Ascending aorta (tissue), 2 donors: ENCODE measurements at regions of chr19 and their contacts with region 1.

Region 1: GRCh38 chr19:14117668-14118164 is at the start of gene PRKACA:
- DNase-seq: peak; percentile 97 to 99
- H3K4me3 ChIP-seq: peak within 1 kb of the TSS; percentile 71 to 96
- H3K27ac ChIP-seq: peak within 1 kb of the TSS; percentile 92 to 99
- H3K4me1 ChIP-seq: peaks cover 23 to 51% of the 10 kb centered on the region in 2 donors
- H3K27me3 ChIP-seq: no peaks in the 10 kb centered on the region
- CTCF ChIP-seq: no peak
- total RNA-seq, gene PRKACA: 92.6 TPM

Region 2: DNA sequence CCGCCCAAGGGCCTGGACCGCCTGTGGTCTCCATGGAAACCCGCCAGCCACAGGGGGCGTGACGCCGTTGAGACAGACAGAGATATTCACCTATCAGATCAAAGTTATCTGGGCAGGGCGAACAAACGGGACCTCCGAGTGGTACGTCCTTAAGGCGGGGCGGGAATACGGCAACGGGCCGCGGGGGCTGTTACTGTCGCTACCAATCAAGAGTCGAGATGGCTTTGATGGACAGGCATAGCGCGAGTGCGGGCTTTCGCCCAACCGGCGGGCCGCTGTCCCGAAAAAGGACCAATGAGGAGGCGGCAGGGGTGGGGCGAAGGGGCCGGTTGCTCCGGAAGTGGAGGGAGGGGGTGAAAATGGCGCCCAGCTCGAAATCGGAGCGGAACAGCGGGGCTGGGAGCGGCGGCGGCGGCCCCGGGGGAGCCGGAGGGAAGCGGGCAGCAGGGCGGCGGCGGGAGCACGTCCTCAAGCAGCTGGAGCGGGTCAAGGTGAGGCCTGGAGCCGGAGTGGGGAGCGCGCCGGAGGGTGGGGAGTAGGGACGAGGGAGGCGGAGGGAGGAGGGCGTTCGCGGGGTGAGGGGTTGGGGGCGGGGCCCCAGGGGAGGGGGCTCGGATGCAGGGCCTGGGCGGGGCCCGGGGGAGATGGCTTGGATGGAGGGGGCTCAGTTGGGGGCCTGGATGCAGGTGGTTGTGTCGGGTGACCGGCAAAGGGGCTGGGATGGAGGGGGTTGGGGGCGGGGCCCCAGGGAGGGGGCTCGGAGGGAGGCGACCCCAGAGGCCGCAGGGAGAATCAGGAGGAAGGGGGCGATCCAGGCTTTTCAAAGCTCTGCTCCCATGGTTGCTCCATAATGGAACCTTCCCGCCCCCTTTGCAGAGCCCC is 165.3 kb before region 1 on chr19 and contains the start of gene DCAF15:
- intact Hi-C with region 1: loop called (anchors 5 kb)
- DNase-seq: peak; percentile 99 to 100
- H3K4me3 ChIP-seq: peak within 1 kb of the TSS; percentile 79 to 81
- H3K27ac ChIP-seq: peak within 1 kb of the TSS; percentile 76 to 77
- H3K4me1 ChIP-seq: peaks cover 6 to 12% of the 10 kb centered on the region in 2 donors
- H3K27me3 ChIP-seq: no peaks in the 10 kb centered on the region
- CTCF ChIP-seq: no peak
- total RNA-seq, gene DCAF15: 35.0 TPM

Region 3: GRCh38 chr19:14081325-14082093 is 36.2 kb before region 1 on chr19:
- intact Hi-C with region 1: loop called (anchors 2 kb)
- DNase-seq: peak; percentile 94 to 99
- H3K4me3 ChIP-seq: peak overlapping the region; percentile 80 to 93
- H3K27ac ChIP-seq: peak overlapping the region; percentile 92 to 97
- H3K4me1 ChIP-seq: peaks cover 4 to 14% of the 10 kb centered on the region in 2 donors
- H3K27me3 ChIP-seq: no peaks in the 10 kb centered on the region
- CTCF ChIP-seq: no peak

Region 4: DNA sequence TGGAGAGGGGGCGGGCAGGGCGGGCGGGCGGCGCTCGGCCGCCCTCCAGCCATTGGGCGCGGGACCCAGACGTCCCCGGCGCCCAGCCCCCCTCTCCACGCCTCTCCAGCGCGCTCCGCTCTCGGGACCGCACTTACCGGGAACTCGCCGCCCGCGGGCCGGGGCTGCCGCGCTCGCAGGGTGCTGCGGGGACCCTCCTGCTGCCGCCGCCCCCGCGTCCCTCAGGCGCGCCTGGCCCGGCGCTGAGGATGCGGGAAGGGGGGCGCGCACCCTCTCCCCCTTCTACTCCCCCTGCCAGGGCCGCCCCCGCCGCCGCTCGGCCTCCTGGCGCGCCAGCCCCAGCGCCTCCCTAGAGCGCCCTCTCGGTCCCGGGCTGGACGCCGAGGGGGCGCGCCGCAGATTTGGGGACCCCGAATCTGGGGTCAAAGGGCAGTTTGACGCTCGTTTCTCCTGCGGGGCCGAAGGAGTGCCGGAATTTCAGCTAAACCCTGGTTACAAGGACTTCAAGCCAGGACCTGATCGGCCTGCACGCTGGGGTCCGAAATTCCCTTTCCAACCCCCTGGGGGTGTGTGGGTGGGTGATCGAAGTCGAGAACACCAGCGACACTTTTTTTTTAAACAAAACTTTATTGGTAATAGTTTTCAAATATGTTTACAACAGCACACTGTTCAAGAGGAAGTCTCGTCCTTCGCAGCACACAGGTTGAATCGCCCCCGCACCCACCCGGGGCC is 26.5 kb before region 1 on chr19:
- intact Hi-C with region 1: loop called (anchors 2 kb)
- DNase-seq: peak in 1 of 2 donors; percentile 77
- H3K4me3 ChIP-seq: peak overlapping the region; percentile 80 to 90
- H3K27ac ChIP-seq: peak overlapping the region; percentile 92 to 94
- H3K4me1 ChIP-seq: peaks cover 3 to 9% of the 10 kb centered on the region in 2 donors
- H3K27me3 ChIP-seq: no peaks in the 10 kb centered on the region
- CTCF ChIP-seq: peak; percentile 3 to 23 (median 13)